ENCODE measurements at regions of chr7 and their contacts with region 1.

Region 1: GRCh38 chr7:30026229-30027064 is at the start of gene FKBP14:
- DNase-seq: peak; percentile 98
- ATAC-seq: peak; percentile 96
- H3K4me3 ChIP-seq: peak within 1 kb of the TSS; percentile 97 to 99
- H3K27ac ChIP-seq: peak within 1 kb of the TSS; percentile 19 to 64
- H3K4me1 ChIP-seq: peaks cover 7% of the 10 kb centered on the region in 2 donors
- H3K27me3 ChIP-seq: no peaks in the 10 kb centered on the region
- total RNA-seq, gene FKBP14: 23.8 to 25.9 TPM

Region 2: DNA sequence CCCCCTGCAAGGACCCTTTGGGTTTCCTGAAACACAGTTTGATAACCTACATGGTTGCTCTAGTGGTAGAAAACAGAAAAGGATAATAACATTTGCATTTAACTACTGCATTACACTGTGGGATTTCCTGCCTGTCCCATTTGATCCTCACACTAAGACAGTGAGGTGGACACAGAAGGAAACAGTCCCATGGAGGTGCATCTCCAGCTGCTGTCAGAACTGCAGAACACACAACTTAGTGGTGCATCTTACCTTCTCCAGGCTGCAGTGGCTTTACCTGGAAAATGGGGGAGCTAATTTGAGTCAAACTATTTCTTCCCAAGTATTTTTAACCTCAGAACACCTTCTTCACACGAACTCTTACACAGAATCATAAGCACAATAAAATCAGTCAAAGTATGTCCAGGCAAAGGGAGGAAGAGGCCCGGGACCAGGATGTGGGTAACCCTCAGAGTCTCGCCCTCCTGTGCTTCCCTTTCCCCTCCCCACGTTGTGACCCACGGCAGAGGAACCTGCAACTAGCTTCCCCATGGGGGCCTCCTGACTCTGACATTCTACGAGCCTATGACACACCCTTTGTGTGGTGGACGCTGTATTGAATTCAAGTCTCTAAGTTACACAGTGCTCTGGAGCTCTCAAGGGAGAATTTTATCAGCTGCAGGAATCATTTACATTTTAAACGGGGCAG is 70.5 kb before region 1 on chr7:
- intact Hi-C with region 1: loop called in 1 of 2 experiments (anchors 10 kb)
- DNase-seq: peak in 1 of 2 donors; percentile 59
- ATAC-seq: peak; percentile 46
- H3K4me3 ChIP-seq: no peak overlapping the region
- H3K27ac ChIP-seq: no peak overlapping the region
- H3K4me1 ChIP-seq: peaks cover 0 to 2% of the 10 kb centered on the region in 2 donors
- H3K27me3 ChIP-seq: no peaks in the 10 kb centered on the region

Region 3: GRCh38 chr7:29988424-29989256 is 37.8 kb before region 1 on chr7:
- intact Hi-C with region 1: loop called (anchors 2 to 5 kb)
- DNase-seq: peak; percentile 73 to 87
- ATAC-seq: peak; percentile 77
- H3K4me3 ChIP-seq: peak overlapping the region; percentile 80 to 89
- H3K27ac ChIP-seq: peak overlapping the region; percentile 46 to 98
- H3K4me1 ChIP-seq: peaks cover 0 to 5% of the 10 kb centered on the region in 2 donors
- H3K27me3 ChIP-seq: no peaks in the 10 kb centered on the region

Region 4: GRCh38 chr7:30068067-30068466 is 41.6 kb after region 1 on chr7:
- intact Hi-C with region 1: loop called in 1 of 2 experiments (anchors 5 kb)
- DNase-seq: no peak
- ATAC-seq: peak; percentile 83
- H3K4me3 ChIP-seq: no peak overlapping the region
- H3K27ac ChIP-seq: peak overlapping the region in 1 of 2 donors; percentile 69
- H3K4me1 ChIP-seq: no peaks in the 10 kb centered on the region
- H3K27me3 ChIP-seq: no peaks in the 10 kb centered on the region

Region 5: GRCh38 chr7:30134611-30135545 is 108.4 kb after region 1 on chr7 and contains the start of gene MTURN:
- intact Hi-C with region 1: loop called in 1 of 2 experiments (anchors 5 kb)
- DNase-seq: peak; percentile 92 to 96
- ATAC-seq: peak; percentile 88
- H3K4me3 ChIP-seq: peak within 1 kb of the TSS; percentile 92 to 97
- H3K27ac ChIP-seq: peak within 1 kb of the TSS; percentile 86 to 91
- H3K4me1 ChIP-seq: peaks cover 0 to 3% of the 10 kb centered on the region in 2 donors
- H3K27me3 ChIP-seq: no peaks in the 10 kb centered on the region
- total RNA-seq, gene MTURN: 43.4 to 72.5 TPM

Measured in aorta (tissue), 5 donors.